ENCODE measurements at regions of chr12 and their contacts with region 1.

Region 1: DNA sequence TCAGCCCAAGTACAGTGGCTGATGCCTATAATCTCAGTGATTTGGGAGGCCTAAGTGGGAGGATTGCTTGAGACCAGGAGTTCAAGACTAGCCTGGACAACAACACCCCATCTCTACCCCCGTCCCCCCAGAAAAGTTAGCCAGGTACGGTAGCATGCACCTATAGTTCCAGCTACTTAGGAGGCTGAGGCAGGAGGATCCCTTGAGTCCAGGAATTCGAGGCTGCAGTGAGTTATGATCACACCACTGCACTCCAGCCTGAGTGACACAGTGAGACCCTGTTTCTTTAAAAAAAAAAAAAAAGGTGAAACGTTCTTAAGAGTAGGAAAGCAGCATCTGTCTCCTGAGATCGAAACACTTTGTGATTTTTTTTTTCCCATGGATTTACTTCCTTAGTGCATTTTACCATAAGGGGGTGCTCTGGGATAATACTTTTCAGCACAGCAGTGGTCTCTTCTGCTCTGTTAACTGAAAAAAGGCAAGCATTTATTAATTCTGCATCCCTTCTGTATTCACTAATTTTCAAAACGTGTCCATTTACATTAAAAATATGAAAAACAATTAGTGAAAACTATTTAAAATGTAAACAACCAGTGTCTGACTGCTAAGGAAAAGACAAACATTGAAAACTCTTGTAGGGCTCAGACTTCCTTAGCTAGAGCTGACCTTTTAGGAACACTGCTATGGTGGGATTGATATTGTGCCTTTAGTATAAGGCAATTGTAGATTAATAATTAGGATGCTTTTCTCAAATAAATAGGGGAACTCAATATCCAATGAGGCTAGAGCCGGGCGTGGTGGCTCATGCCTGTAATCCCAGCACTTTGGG is 31.2 kb upstream of the USP44 start:
- DNase-seq: peak; percentile 71
- ATAC-seq: peak; percentile 81
- H3K4me3 ChIP-seq: no peak overlapping the region
- H3K27ac ChIP-seq: no peak overlapping the region
- H3K4me1 ChIP-seq: no peaks in the 10 kb centered on the region
- H3K27me3 ChIP-seq: no peaks in the 10 kb centered on the region
- CTCF ChIP-seq: peak; percentile 82

Region 2: DNA sequence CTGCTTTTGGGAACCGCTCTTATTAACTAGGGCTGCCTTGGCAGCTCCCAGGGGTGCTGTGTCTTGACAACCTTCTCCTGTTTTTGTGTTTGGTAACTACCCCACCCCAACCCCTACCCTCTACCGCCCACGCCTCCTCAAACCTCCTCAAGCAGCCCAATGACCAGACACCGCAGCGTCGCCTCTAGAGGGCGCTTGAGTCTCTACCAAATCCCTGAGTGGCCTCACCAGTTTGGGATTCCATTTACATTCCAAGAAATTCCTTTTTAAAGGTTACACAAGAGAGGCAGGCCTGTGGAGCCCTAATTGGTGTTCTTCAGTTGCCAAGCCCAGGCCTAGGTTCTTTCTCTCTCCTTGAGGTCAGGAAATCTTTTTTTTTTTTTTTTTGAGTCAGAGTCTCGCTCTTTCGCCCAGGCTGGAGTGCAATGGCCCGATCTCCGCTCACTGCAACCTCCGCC is 41.2 kb after region 1 on chr12:
- CTCF ChIA-PET with region 1: no interaction called
- POLR2A ChIA-PET with region 1: no interaction called
- intact Hi-C with region 1: loop called (anchors 2 kb)
- DNase-seq: peak; percentile 89
- ATAC-seq: peak; percentile 94
- H3K4me3 ChIP-seq: no peak overlapping the region
- H3K27ac ChIP-seq: peak overlapping the region; percentile 14; the same call in 1 of the 2 replicates
- H3K4me1 ChIP-seq: peaks cover 5% of the 10 kb centered on the region
- H3K27me3 ChIP-seq: no peaks in the 10 kb centered on the region
- CTCF ChIP-seq: peak; percentile 87

Region 3: DNA sequence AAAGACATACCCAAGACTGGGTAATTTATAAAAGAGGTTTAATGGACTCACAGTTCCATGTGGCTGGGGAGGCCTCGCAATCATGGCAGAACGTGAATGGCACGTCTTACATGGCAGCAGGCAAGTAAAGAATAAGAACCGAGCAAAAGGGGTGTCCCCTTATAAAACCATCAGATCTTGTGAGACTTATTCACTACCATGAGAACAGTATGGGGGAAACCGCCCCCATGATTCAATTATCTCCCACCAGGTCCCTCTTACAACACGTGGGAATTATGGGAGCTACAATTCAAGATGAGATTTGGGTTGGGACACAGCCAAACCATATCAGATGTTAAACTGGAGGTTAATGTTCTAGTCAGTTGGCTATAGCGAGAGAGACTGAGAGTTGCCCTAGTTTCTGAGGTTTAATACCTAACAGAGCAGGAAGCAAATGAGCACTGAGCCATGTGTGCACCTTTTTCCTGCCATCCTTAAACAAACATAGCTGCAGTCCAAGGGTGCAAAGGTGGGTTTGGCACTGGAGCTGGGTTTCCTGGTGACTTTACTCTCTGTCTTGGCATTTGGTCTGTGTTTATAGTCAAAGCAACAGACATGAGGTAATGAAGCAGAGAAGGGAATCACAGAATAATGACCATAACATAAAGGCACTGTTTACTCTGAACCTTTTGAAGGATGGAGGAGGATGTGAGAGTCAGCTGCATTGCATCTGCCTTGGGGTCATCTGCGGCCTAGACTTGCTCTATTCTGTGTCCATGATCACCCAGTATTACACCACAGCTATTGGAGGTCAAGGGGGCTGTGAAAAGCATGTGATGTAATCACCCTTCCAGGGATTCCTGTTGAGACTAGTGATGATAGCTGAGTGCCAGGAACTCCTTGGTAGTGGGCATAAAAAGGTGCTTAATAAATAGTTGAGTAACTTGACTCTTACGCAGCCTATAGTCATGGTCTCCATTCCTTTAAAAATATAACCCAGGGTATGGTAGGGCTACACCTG is 52.5 kb after region 1 on chr12:
- CTCF ChIA-PET with region 1: no interaction called
- POLR2A ChIA-PET with region 1: no interaction called
- intact Hi-C with region 1: no loop called
- DNase-seq: peak; percentile 58
- ATAC-seq: no peak
- H3K4me3 ChIP-seq: no peak overlapping the region
- H3K27ac ChIP-seq: peak overlapping the region; percentile 91
- H3K4me1 ChIP-seq: peaks cover 41% of the 10 kb centered on the region
- H3K27me3 ChIP-seq: no peaks in the 10 kb centered on the region
- CTCF ChIP-seq: no peak

Region 4: GRCh38 chr12:95820102-95820703 is 237.8 kb after region 1 on chr12:
- CTCF ChIA-PET with region 1: interaction called, 3 read pairs
- POLR2A ChIA-PET with region 1: no interaction called
- intact Hi-C with region 1: loop called (anchors 1 kb)
- DNase-seq: peak; percentile 88
- ATAC-seq: peak; percentile 51
- H3K4me3 ChIP-seq: no peak overlapping the region
- H3K27ac ChIP-seq: no peak overlapping the region
- H3K4me1 ChIP-seq: peaks cover 4% of the 10 kb centered on the region; the same call in 1 of the 2 replicates
- H3K27me3 ChIP-seq: no peaks in the 10 kb centered on the region
- CTCF ChIP-seq: peak; percentile 90

Region 5: GRCh38 chr12:95848575-95849388 is 266.3 kb after region 1 on chr12:
- CTCF ChIA-PET with region 1: no interaction called
- POLR2A ChIA-PET with region 1: no interaction called
- intact Hi-C with region 1: loop called (anchors 1 kb)
- DNase-seq: peak; percentile 67
- ATAC-seq: peak; percentile 94
- H3K4me3 ChIP-seq: no peak overlapping the region
- H3K27ac ChIP-seq: no peak overlapping the region
- H3K4me1 ChIP-seq: no peaks in the 10 kb centered on the region
- H3K27me3 ChIP-seq: no peaks in the 10 kb centered on the region
- CTCF ChIP-seq: peak; percentile 71